ENCODE measurements at regions of chr5 and their contacts with region 1.

Region 1: DNA sequence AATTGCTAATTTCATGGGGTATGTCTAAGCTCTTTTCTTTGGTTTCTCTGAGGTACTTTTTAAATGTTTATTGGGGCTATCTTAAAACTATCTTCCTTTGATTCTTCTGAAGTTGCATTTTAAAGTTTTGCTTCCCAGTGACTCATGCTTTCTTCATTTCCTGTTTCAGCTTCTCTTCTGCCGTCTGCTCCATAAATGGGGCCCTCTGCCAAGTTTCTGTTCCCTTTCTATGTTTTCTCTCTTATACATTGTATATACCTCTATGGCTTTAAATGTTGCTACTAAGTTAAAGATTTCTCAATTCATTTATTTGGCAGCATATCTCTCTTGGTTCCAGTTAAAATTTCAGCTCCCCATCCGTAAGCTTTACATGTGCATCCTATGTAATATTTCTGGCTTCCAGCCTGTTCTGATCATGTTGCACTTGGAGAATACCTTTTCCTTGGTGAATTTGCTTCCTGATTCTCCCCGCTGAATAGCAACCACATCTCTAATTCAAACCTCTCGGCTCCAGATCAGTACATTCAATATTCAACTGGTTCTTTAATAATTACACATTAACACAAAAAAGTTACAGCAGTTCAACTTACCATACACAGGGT is 125.3 kb downstream of the ST8SIA4 start:
- DNase-seq: peak; percentile 29
- ATAC-seq: peak; percentile 68
- H3K4me3 ChIP-seq: peak overlapping the region in 1 of 2 experiments; percentile 31; a peak in 1 of 4 replicates
- H3K27ac ChIP-seq: peak overlapping the region; percentile 36; the same call in 1 of the 2 replicates
- H3K4me1 ChIP-seq: peaks cover 9 to 20% of the 10 kb centered on the region in 2 experiments; a peak in 3 of 4 replicates
- H3K27me3 ChIP-seq: no peaks in the 10 kb centered on the region
- CTCF ChIP-seq: no peak
- POLR2A ChIP-seq: no peak
- RAD21 ChIP-seq: no peak

Region 2: GRCh38 chr5:99104538-99105132 is 1673.1 kb before region 1 on chr5:
- CTCF ChIA-PET with region 1: no interaction called
- POLR2A ChIA-PET with region 1: no interaction called
- RAD21 ChIA-PET with region 1: no interaction called
- intact Hi-C with region 1: loop called (anchors 10 kb)
- DNase-seq: peak; percentile 28
- ATAC-seq: no peak
- H3K4me3 ChIP-seq: no peak overlapping the region
- H3K27ac ChIP-seq: no peak overlapping the region
- H3K4me1 ChIP-seq: no peaks in the 10 kb centered on the region
- H3K27me3 ChIP-seq: 0 out of 2 replicates have a peak, but pooled peaks cover 6% of the 10 kb centered on the region
- CTCF ChIP-seq: peak; percentile 35 to 51 (median 41); a peak in 4 of 6 replicates
- POLR2A ChIP-seq: no peak
- RAD21 ChIP-seq: peak; percentile 71

Region 3: DNA sequence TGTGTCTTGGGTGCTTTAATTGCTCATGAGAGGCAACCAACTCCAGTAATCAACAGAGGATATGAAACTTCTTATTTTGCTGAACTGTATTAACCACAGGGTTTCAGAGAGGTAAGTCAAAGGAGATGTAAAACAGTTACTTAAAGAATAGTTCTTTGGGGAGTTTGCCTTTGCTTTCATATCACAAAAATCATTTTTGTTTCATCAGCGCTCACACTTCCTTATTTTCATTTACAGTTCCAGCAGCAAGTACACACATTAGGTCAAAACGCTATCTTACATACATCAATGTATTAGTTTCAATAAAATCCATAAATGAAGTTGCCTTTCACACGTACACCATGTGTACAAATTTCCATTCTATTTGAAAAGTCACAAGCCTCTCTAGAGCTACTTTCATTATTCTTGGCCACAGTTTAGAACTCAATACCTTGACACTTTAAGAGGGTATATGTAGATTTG is 75.2 kb after region 1 on chr5:
- CTCF ChIA-PET with region 1: no interaction called
- POLR2A ChIA-PET with region 1: no interaction called
- RAD21 ChIA-PET with region 1: no interaction called
- intact Hi-C with region 1: no loop called
- DNase-seq: no peak
- ATAC-seq: no peak
- H3K4me3 ChIP-seq: no peak overlapping the region
- H3K27ac ChIP-seq: no peak overlapping the region
- H3K4me1 ChIP-seq: no peaks in the 10 kb centered on the region
- H3K27me3 ChIP-seq: no peaks in the 10 kb centered on the region
- CTCF ChIP-seq: no peak
- POLR2A ChIP-seq: no peak
- RAD21 ChIP-seq: no peak

Region 4: DNA sequence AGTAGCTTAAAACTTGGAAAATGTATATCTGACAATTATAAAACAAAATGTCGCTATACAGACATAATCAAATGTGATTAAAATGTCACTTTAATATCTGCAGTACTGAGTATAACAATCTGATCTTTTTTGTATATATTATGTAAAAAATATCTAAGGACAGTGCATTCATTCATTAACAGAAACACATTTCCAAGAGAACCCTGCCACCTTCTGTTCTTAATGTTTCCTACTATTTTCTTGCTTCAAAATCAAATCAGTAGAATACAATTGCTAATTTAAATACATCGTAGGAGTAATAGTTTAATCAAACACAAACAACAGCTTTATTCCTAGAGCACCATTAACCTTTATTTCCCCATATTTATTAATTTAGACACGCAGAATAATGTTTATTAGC is 267.9 kb after region 1 on chr5:
- CTCF ChIA-PET with region 1: interaction called, 10 read pairs
- POLR2A ChIA-PET with region 1: no interaction called
- RAD21 ChIA-PET with region 1: no interaction called
- intact Hi-C with region 1: no loop called
- DNase-seq: peak; percentile 15
- ATAC-seq: no peak
- H3K4me3 ChIP-seq: no peak overlapping the region
- H3K27ac ChIP-seq: no peak overlapping the region
- H3K4me1 ChIP-seq: no peaks in the 10 kb centered on the region
- H3K27me3 ChIP-seq: no peaks in the 10 kb centered on the region
- CTCF ChIP-seq: peak in 2 of 3 experiments; percentile 43 to 50; a peak in 3 of 6 replicates
- POLR2A ChIP-seq: no peak
- RAD21 ChIP-seq: peak; percentile 69

Region 5: DNA sequence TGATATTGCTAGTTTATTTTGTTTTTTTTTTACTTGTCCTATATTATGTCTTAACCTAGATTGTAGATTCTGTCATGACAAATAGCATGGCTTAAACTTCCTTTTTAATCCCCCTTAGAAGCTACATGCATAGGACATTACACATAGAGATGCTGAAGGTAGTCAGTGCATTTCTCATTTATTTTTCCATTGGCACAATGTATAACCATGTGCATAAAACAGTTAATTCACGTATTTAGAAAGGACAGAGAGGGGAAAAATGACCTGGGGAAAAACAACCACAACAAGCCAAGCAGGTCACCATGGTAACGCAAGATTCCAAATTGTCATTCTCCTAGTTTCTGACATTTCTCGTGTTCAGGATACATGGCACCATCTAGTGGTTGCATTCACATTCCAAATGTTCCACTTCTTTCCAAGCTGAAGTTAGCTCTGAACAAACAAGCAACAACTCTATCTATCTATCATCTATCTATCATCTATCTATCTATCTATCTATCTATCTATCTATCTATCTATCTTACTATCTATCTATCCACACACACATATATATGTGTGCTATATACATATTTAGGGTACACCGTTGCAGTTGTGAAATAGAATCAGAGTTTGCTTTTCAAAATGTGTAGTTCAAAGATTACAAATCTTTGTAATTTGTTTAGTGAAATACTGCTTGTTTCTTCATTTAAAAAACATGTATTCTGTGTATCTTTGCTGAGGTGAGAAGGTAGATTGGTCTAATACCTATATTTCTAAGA is 612.5 kb after region 1 on chr5:
- CTCF ChIA-PET with region 1: interaction called, 14 read pairs
- POLR2A ChIA-PET with region 1: no interaction called
- RAD21 ChIA-PET with region 1: interaction called, 4 to 5 read pairs
- intact Hi-C with region 1: loop called (anchors 2 kb)
- DNase-seq: peak; percentile 57
- ATAC-seq: peak; percentile 69
- H3K4me3 ChIP-seq: no peak overlapping the region
- H3K27ac ChIP-seq: no peak overlapping the region
- H3K4me1 ChIP-seq: no peaks in the 10 kb centered on the region
- H3K27me3 ChIP-seq: no peaks in the 10 kb centered on the region
- CTCF ChIP-seq: peak; percentile 31 to 73 (median 58); a peak in 5 of 6 replicates
- POLR2A ChIP-seq: no peak
- RAD21 ChIP-seq: peak; percentile 74

Region 6: DNA sequence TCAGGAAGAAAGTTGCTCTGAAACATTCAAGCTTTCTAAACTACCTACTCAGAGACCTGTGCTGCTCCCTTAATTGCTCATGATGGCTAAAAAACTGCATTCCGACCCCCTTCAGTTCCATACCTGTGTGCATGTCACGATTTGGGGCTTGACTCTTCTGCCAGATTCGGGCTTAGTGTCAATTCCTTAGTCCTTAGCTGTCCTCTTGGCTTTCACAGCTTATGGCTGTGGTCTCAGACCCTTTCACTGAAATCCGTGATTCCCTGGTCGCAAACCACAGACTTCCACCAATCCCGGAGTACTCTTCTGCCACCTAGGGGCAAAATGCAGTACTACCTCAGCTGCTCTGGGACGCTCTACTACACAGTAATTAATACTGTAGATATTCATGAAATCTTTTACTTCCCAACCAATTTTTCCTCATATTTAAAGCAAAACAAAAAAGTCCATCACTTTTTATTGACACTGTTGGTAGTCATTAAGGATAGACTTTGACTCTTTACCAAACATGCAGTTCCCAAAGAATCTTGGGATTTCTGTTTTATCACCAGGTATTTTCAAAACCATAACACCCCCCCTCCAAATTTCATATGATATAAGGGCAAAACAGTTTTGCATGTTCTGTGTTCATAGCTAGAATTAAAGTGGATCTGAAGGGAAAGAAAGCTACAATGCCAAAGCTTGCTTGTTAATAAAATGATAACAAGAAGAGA is 900.9 kb after region 1 on chr5:
- CTCF ChIA-PET with region 1: interaction called, 4 read pairs
- POLR2A ChIA-PET with region 1: no interaction called
- RAD21 ChIA-PET with region 1: no interaction called
- intact Hi-C with region 1: loop called (anchors 5 kb)
- DNase-seq: peak; percentile 59
- ATAC-seq: peak; percentile 98
- H3K4me3 ChIP-seq: peak overlapping the region in 1 of 2 experiments; percentile 34; a peak in 2 of 4 replicates
- H3K27ac ChIP-seq: no peak overlapping the region
- H3K4me1 ChIP-seq: peaks cover 0 to 5% of the 10 kb centered on the region in 2 experiments; a peak in 1 of 4 replicates
- H3K27me3 ChIP-seq: no peaks in the 10 kb centered on the region
- CTCF ChIP-seq: peak; percentile 36 to 96 (median 88); a peak in 5 of 6 replicates
- POLR2A ChIP-seq: no peak
- RAD21 ChIP-seq: peak; percentile 79